Astrocyte of the cerebellum (primary cell): ENCODE measurements at regions of chr13 and their contacts with region 1.

Region 1: GRCh38 chr13:66835040-66835628 is 395.0 kb downstream of the PCDH9 start:
- DNase-seq: peak; percentile 66
- H3K4me3 ChIP-seq: no peak overlapping the region
- CTCF ChIP-seq: no peak

Region 2: DNA sequence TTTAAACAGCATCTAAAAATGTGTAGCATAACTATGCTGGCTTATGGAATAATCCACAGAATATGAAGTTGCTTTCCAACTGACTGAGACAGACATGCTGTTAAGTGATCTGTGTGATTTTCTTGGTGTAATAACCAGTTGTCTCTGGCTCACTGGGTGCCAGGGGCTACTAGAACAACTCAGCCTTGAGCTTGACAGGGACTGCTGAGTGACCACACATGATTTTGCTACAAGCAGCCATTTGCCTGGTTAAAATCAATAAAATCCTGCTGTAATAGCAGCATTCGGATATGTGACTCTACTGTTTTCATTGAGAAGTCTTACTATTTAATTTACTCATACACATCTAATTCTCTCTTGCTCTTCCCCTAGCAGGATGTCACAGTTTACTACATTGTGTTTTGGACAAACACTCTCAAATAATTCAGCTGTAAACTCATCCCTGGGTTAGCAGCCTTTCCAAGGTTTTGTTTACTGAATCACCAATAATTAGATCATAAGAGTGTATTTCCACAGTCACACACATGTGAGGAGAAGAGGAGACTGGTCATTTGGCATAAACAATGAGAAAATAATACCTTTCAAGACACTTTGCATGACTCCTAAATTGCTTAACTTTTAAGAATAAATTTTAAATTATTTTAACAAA is 31.2 kb before region 1 on chr13:
- in situ Hi-C with region 1: loop called (anchors 5 kb)
- DNase-seq: no peak
- H3K4me3 ChIP-seq: no peak overlapping the region
- CTCF ChIP-seq: no peak

Region 3: DNA sequence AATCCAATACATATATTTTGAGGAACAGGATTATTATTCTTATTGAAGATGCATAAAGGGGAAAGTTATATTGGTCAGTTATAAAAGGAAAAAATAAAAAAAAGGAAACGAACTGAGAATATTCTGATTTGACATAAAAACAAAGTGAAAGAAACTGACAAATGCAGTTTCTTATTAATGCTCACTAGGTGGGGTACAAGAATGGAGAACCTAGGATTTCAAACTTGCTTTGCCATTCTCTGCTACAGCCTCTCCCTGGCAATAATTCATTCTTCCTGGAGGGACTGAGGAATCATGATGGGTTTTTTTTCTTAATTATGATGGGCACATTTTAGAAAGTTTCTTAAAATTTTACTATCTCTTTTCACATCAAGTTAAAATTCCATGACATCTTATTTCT is 240.1 kb after region 1 on chr13:
- in situ Hi-C with region 1: no loop called
- DNase-seq: peak; percentile 5
- H3K4me3 ChIP-seq: no peak overlapping the region
- CTCF ChIP-seq: peak; percentile 23